ENCODE measurements at regions of chr2 and their contacts with region 1.

Region 1: DNA sequence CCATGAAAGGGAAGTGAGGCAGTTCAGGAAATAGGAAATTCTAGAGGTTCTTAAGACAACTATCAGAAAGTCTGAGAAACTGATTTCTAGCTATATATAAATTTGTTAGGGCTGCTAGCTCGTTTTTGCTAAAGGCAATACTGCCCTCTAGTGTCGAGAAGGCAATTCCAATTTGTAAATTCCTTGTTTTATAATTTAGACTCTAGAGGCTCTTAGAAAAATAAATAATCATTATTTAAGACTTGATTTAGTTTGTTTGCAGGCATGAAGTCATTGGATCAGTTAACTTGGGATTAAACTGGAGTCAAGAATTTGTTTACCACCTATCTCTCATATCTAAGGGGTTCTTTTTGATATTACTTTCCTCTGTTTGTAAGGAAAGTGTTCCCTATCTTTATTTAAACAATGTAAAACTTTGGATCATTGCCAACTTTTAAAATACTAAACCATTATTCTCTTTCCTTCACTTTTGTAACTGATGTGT is 66.2 kb downstream of the ACVR2A start:
- DNase-seq: no peak
- ATAC-seq: peak; percentile 81
- H3K4me3 ChIP-seq: no peak overlapping the region
- H3K27ac ChIP-seq: no peak overlapping the region
- H3K4me1 ChIP-seq: no peaks in the 10 kb centered on the region
- H3K27me3 ChIP-seq: no peaks in the 10 kb centered on the region

Region 2: GRCh38 chr2:146734042-146734820 is 1176.8 kb before region 1 on chr2:
- intact Hi-C with region 1: loop called in 1 of 2 experiments (anchors 10 kb)
- DNase-seq: no peak
- ATAC-seq: peak; percentile 62
- H3K4me3 ChIP-seq: no peak overlapping the region
- H3K27ac ChIP-seq: no peak overlapping the region
- H3K4me1 ChIP-seq: no peaks in the 10 kb centered on the region
- H3K27me3 ChIP-seq: no peaks in the 10 kb centered on the region

Region 3: GRCh38 chr2:147305496-147305895 is 605.5 kb before region 1 on chr2:
- intact Hi-C with region 1: no loop called
- DNase-seq: no peak
- ATAC-seq: no peak
- H3K4me3 ChIP-seq: no peak overlapping the region
- H3K27ac ChIP-seq: no peak overlapping the region
- H3K4me1 ChIP-seq: no peaks in the 10 kb centered on the region
- H3K27me3 ChIP-seq: no peaks in the 10 kb centered on the region

Region 4: GRCh38 chr2:147739508-147739907 is 171.5 kb before region 1 on chr2:
- intact Hi-C with region 1: no loop called
- DNase-seq: no peak
- ATAC-seq: no peak
- H3K4me3 ChIP-seq: no peak overlapping the region
- H3K27ac ChIP-seq: no peak overlapping the region
- H3K4me1 ChIP-seq: no peaks in the 10 kb centered on the region
- H3K27me3 ChIP-seq: no peaks in the 10 kb centered on the region

Measured in aorta (tissue), 5 donors.